GM10248 (cell line): ENCODE measurements at regions of chr14 and their contacts with region 1.

Region 1: DNA sequence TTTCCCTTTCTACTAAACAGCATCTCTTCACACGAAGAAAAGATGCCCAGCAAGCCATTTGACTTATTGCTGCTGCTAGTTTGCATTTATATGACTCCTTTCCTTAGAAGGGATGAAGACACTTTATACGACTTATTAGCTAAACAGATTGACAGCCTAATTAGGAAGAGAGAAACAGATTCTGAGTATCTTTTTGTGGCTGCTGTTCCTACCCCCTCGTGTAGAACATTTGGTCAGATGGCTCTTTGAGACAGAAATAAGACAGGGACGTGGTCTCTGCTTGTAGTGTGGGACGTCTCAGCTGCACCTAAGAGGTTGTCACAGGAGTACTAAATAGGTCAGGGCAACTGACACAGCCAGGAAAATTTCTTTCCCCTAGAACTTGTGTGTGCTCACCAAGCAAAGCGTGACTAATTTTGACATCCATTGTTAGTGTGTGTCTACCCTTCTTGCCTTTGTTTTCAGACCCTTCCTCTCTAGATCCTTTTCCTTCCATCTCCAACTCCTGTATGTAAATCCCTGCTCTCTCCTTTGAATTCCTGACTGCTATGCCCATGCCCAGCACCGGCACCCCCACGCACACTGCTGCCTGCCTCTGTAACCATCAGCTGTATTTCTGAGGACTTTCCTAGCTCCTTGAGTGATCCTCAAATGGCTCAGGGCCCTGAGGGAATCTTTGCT is 83.2 kb downstream of the DAD1 start:
- DNase-seq: peak; percentile 48
- CTCF ChIP-seq: no peak

Region 2: GRCh38 chr14:22448905-22449599 is 56.8 kb before region 1 on chr14:
- CTCF ChIA-PET with region 1: no interaction called
- POLR2A ChIA-PET with region 1: no interaction called
- DNase-seq: peak; percentile 38
- CTCF ChIP-seq: no peak

Region 3: DNA sequence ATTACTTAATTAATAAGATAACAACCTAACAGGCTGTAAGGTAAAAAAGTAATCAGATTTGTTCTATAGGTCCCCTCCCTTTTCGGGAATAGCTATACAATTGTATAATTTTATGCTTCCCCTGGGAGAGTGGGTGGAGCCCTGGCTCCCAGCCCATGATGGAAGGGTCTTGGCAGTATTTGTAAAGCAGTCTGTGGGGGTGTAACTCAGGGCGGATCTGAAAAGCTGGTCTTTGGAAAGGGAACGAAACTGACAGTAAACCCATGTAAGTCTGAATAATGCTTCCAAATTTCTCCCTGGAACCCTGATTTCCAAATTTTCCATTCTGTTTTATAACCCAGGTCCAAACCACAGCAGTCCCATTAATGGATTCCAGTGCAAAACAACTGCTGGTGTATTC is 27.2 kb before region 1 on chr14:
- CTCF ChIA-PET with region 1: interaction called, 29 read pairs
- POLR2A ChIA-PET with region 1: interaction called, 6 read pairs
- DNase-seq: no peak
- CTCF ChIP-seq: no peak

Region 4: GRCh38 chr14:22483863-22484593 is 21.8 kb before region 1 on chr14:
- CTCF ChIA-PET with region 1: interaction called, 29 read pairs
- POLR2A ChIA-PET with region 1: interaction called, 19 read pairs
- DNase-seq: no peak
- CTCF ChIP-seq: no peak

Region 5: GRCh38 chr14:22491683-22492621 is 13.9 kb before region 1 on chr14:
- CTCF ChIA-PET with region 1: interaction called, 16 read pairs
- POLR2A ChIA-PET with region 1: interaction called, 19 read pairs
- DNase-seq: peak; percentile 39
- CTCF ChIP-seq: no peak

Region 6: DNA sequence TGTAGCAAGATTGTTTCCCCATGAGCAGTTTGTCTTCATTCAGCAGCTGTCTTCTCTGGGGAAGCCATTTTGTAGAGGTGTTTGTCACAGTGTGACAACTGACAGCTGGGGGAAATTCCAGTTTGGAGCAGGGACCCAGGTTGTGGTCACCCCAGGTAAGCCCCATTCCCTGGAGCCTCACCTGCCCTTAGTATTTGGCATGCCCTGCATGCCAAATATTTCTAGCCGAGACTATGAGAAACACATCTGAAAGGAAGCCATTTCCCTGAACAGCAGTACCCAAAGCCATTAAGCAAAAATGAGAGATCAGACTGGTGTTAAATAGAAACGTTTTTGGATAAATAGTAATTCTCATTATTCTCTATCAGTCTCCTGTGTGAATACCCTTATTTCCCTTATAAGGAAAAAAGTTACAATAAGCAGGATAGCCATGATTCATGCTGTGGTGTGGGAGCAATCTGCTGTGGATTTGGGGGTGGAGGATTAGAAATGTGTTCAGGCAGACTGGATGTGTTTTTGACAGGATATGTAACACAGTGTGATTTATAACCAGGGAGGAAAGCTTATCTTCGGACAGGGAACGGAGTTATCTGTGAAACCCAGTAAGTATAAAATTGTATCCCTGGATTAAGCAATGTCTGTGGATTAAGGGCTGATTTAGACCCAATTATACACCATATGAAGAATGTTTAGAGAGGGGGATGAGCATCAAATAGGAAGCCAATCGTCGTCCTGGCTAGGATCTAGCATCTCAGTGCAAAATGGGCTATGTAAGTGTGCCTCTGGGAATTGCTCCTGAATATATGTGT is 14.2 kb after region 1 on chr14:
- CTCF ChIA-PET with region 1: interaction called, 16 read pairs
- POLR2A ChIA-PET with region 1: no interaction called
- DNase-seq: no peak
- CTCF ChIP-seq: no peak

Region 7: DNA sequence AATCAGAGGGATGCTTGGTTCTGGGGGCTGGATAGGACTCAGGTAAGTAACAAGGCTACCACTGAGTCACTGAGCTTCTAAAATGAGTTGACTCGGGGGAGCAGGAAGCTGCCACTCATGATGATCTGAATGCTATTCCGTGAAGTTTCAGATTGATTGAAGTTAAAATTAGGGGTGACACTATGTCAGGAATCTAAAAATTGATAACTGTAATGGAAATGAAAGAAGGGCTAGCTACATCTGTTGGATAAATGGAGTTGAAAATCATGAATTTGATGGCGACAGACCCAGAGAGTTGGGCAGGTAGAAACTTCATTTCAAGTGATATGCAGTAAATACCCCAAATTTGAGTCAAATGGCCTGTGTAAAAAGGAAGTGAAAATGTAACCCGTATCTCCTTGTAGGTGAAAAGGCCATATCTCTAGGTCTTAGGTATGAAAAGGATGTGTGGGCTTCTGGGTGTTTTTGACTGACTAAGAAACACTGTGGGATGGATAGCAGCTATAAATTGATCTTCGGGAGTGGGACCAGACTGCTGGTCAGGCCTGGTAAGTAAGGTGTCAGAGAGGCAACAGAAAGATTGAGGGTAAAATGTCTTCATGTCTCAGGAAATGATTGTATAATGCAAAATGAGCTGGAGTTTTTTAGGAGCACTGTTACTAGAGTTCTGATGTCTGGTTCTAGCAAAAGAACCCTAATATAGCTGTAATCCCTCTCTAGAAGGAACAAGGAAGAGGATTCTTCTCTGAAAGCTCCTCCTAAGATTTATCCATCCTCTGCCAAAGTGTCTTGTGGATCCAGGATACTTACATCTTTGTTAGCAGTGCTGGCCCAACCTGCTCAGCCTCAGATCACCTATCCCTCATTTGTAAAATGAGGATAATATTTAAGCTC is 25.9 kb after region 1 on chr14:
- CTCF ChIA-PET with region 1: interaction called, 18 read pairs
- POLR2A ChIA-PET with region 1: interaction called, 3 read pairs
- DNase-seq: peak; percentile 60
- CTCF ChIP-seq: no peak

Region 8: DNA sequence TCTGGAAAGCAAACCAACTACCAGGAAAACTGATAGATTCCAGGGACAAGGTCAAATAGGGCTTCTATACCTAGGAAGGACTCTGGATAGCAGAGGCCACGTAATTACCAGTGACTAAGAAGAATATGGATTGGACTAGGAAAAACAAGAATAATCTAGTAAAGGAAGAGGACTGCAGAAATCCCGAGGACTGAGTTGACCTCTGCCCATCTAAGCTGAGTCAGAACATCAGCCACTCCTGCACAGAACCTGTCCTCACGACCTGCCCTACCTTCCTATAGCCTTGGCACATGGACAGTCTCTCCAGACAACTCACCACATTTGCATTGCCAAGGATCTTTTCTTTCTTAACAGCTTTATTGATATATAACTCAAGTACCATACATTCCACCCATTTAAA is 136.0 kb after region 1 on chr14:
- CTCF ChIA-PET with region 1: no interaction called
- POLR2A ChIA-PET with region 1: no interaction called
- DNase-seq: no peak
- CTCF ChIP-seq: no peak